CD4-positive, alpha-beta memory T cell (primary cell): ENCODE measurements at regions of chr10 and their contacts with region 1.

Region 1: DNA sequence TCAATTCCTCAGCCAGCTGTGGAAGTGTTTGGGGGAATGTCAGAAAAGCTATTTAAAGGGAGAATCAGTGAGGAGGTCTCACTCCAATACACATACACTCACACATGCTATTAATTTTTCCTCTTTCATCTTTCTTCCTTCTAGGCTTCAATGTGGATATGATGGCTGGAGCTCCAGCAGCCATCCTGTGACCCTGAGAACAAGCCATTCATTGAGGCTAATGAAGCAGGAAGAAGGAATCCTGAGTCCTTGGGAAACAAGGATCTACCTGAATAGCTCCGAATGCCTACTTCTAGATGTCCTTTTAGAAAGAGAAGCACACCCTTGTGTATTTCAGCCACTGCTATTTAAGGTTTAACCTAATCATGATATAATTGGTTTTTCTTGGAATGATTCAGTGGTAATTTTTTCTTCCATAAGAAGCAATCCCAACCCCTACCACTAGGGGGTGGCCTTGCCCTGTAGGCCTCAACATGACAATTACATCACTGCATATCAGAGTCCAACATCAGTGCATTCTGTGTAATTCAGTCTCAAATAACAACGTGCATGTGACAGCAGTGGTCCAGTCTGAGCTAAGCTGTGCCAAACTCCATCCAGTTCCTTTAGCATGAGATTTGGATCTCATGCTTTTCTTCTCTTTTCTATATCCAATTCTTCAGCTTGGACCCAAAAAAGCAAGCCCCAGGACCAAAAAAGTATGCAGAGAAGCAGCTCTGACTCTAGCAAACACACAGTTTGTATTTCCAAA is 85.3 kb upstream of the ANKRD1 start:
- DNase-seq: peak; percentile 60 to 73 (median 67)
- H3K4me3 ChIP-seq: no peak overlapping the region
- H3K4me3 Mint-ChIP-seq: peak overlapping the region; percentile 40 to 89 (median 73)
- H3K27ac ChIP-seq: no peak overlapping the region
- H3K27ac Mint-ChIP-seq: peak overlapping the region; percentile 30 to 88 (median 74)
- H3K4me1 ChIP-seq: peaks cover 18% of the 10 kb centered on the region
- H3K4me1 Mint-ChIP-seq: peaks cover 11 to 21% (median 16%) of the 10 kb centered on the region in 4 donors
- H3K27me3 ChIP-seq: no peaks in the 10 kb centered on the region
- H3K27me3 Mint-ChIP-seq: peaks cover 0 to under 1% of the 10 kb centered on the region in 2 donors

Region 2: DNA sequence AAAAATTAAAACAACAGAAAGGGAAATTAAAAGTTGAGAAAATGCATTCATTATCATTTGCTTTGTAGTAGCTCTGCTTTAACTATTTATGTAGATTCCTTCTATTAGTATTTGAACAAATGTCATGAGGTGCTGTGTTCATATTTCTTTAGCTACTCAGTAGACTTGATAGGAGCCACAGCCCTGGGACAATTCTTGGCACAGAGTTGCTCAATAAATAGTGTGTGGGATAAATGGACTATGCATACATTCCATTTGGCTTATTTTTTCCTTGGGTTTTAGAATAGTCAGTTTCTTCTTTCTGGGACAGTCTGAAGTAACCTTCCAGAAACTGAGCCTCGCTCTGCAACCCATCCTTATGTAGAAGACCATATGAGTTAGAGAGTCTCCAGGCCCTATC is 121.0 kb before region 1 on chr10:
- CTCF ChIA-PET with region 1: interaction called, 4 read pairs
- POLR2A ChIA-PET with region 1: no interaction called
- intact Hi-C with region 1: loop called (anchors 10 kb)
- DNase-seq: no peak
- H3K4me3 ChIP-seq: no peak overlapping the region
- H3K4me3 Mint-ChIP-seq: no peak overlapping the region
- H3K27ac ChIP-seq: no peak overlapping the region
- H3K27ac Mint-ChIP-seq: no peak overlapping the region
- H3K4me1 ChIP-seq: no peaks in the 10 kb centered on the region
- H3K4me1 Mint-ChIP-seq: peaks cover under 1 to 6% (median 4%) of the 10 kb centered on the region in 4 donors
- H3K27me3 ChIP-seq: no peaks in the 10 kb centered on the region
- H3K27me3 Mint-ChIP-seq: no peaks in the 10 kb centered on the region

Region 3: GRCh38 chr10:91088300-91089140 is 82.3 kb after region 1 on chr10:
- CTCF ChIA-PET with region 1: interaction called, 22 read pairs
- POLR2A ChIA-PET with region 1: no interaction called
- intact Hi-C with region 1: loop called (anchors 1 kb)
- DNase-seq: peak in 4 of 5 donors; percentile 22 to 29 (median 24)
- H3K4me3 ChIP-seq: no peak overlapping the region
- H3K4me3 Mint-ChIP-seq: no peak overlapping the region
- H3K27ac ChIP-seq: no peak overlapping the region
- H3K27ac Mint-ChIP-seq: peak overlapping the region in 1 of 7 donors; percentile 36
- H3K4me1 ChIP-seq: no peaks in the 10 kb centered on the region
- H3K4me1 Mint-ChIP-seq: no peaks in the 10 kb centered on the region
- H3K27me3 ChIP-seq: no peaks in the 10 kb centered on the region
- H3K27me3 Mint-ChIP-seq: no peaks in the 10 kb centered on the region

Region 4: GRCh38 chr10:91251430-91252056 is 245.4 kb after region 1 on chr10:
- CTCF ChIA-PET with region 1: interaction called, 324 read pairs
- POLR2A ChIA-PET with region 1: interaction called, 8 read pairs
- intact Hi-C with region 1: loop called (anchors 1 kb)
- DNase-seq: peak; percentile 50 to 69 (median 66)
- H3K4me3 ChIP-seq: no peak overlapping the region
- H3K4me3 Mint-ChIP-seq: no peak overlapping the region
- H3K27ac ChIP-seq: no peak overlapping the region
- H3K27ac Mint-ChIP-seq: peak overlapping the region in 1 of 7 donors; percentile 10
- H3K4me1 ChIP-seq: peaks cover 22% of the 10 kb centered on the region
- H3K4me1 Mint-ChIP-seq: peaks cover 5 to 9% (median 6%) of the 10 kb centered on the region in 4 donors
- H3K27me3 ChIP-seq: no peaks in the 10 kb centered on the region
- H3K27me3 Mint-ChIP-seq: no peaks in the 10 kb centered on the region

Region 5: GRCh38 chr10:91409869-91410637 is 403.9 kb after region 1 on chr10 and contains the start of gene HECTD2:
- CTCF ChIA-PET with region 1: no interaction called
- POLR2A ChIA-PET with region 1: no interaction called
- intact Hi-C with region 1: loop called (anchors 1 kb)
- DNase-seq: peak; percentile 78 to 90 (median 88)
- H3K4me3 ChIP-seq: peak within 1 kb of the TSS; percentile 88 to 92
- H3K4me3 Mint-ChIP-seq: peak within 1 kb of the TSS; percentile 88 to 97 (median 91)
- H3K27ac ChIP-seq: peak within 1 kb of the TSS; percentile 74
- H3K27ac Mint-ChIP-seq: peak within 1 kb of the TSS; percentile 78 to 97 (median 95)
- H3K4me1 ChIP-seq: peaks cover 20% of the 10 kb centered on the region
- H3K4me1 Mint-ChIP-seq: peaks cover 7 to 15% (median 11%) of the 10 kb centered on the region in 4 donors
- H3K27me3 ChIP-seq: no peaks in the 10 kb centered on the region
- H3K27me3 Mint-ChIP-seq: peaks cover 0 to under 1% of the 10 kb centered on the region in 2 donors
- total RNA-seq, gene HECTD2: 2.6 to 2.7 TPM